ENCODE measurements at regions of chr2 and their contacts with region 1.

Region 1: GRCh38 chr2:229800997-229801754 is 86.8 kb upstream of the DNER start:
- DNase-seq: peak; percentile 68 to 87
- H3K4me3 ChIP-seq: no peak overlapping the region
- H3K27ac ChIP-seq: no peak overlapping the region
- H3K4me1 ChIP-seq: peaks cover 0 to 12% (median 5%) of the 10 kb centered on the region in 4 donors
- H3K27me3 ChIP-seq: no peaks in the 10 kb centered on the region
- CTCF ChIP-seq: peak in 5 of 7 experiments; percentile 29 to 71 (median 63)
- EP300 ChIP-seq: no peak
- POLR2A ChIP-seq: no peak

Region 2: DNA sequence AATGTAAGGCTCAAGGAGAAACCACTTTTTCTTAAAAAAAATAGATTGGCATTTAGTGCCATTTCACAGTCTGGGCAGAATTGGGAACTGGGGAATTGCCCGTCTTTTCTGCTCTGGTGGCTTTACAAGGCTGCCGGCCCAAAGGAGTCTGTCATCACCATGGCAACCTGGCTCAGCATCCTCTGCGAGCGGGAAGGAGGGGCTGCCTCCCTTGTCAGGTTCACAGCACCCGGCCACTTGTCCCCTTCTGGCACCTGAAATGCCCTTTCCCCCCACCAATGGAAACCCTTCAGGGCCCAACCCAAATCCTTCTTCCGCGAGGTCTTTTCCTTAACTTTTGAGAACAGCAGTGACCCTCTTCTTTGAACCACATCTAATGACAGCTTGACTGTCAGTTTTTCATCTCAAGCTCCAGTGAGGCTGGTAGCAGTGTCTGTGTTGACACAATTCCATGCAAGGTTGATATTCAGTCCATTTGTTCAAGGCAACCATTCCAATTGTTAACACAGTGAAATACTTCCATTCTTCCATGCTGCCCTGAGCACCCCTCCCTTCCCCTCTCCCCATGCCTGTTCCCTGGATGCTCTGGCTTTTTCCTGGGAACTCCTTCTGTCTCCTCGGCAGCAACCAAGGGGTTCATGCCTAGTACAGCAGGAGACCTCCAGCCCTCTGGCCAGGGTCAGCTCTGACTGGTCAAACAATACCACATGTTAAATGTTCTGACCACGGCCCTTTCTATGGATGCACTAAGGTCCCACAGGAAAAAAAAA is 166.4 kb before region 1 on chr2:
- intact Hi-C with region 1: no loop called
- DNase-seq: peak in 1 of 2 donors; percentile 15
- H3K4me3 ChIP-seq: no peak overlapping the region
- H3K27ac ChIP-seq: no peak overlapping the region
- H3K4me1 ChIP-seq: no peaks in the 10 kb centered on the region
- H3K27me3 ChIP-seq: peaks cover 0 to 22% (median 6%) of the 10 kb centered on the region in 3 donors
- CTCF ChIP-seq: no peak
- EP300 ChIP-seq: no peak
- POLR2A ChIP-seq: no peak

Region 3: DNA sequence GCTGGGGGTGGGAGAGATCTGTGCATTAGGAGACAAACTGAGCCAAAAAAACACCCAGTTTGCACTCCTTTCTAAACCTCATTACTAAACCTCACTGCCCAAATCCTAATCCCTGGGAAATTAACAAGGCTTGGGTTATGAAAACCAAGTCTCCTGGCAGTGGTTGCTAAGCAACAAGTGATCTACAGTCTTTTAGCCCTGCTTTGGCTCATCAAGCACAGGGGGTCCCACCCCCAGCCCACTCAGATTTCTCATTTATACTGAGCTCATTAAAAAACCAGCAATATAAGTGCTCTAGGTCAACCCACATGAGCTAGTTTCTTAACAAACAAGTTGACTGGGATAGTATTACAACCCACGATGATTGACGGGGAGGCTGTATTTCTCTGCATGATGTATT is 105.2 kb before region 1 on chr2:
- intact Hi-C with region 1: no loop called
- DNase-seq: no peak
- H3K4me3 ChIP-seq: no peak overlapping the region
- H3K27ac ChIP-seq: no peak overlapping the region
- H3K4me1 ChIP-seq: no peaks in the 10 kb centered on the region
- H3K27me3 ChIP-seq: no peaks in the 10 kb centered on the region
- CTCF ChIP-seq: no peak
- EP300 ChIP-seq: no peak
- POLR2A ChIP-seq: no peak

Region 4: DNA sequence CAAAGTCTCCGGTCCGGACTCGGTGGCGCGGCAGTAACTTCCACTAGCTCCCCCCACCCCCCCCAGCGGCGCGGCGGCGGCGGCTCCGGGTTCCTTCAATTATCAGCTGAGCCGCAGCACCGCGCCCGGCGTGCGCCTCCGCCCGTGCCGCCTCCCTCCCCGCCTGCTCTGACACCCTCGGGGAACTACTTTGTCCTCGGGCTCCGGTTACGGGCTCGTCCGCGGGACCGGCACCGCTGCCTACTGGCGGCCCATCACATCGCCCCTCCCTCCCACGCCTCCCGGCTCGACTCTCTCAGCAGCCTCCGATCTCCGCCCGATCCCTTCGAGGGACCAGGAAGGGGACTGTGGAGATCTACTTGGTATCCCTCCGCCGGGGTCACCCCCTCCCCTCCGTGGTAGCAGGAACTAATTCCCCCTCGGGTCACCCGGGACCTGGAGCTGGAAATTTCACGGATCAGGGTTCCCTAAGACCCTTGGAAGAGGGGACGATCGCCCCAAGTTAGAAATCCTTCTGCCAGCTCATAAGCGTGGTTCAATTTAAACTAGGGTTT is 120.8 kb after region 1 on chr2 and contains the start of gene TRIP12:
- intact Hi-C with region 1: loop called (anchors 10 kb)
- DNase-seq: peak; percentile 92 to 98
- H3K4me3 ChIP-seq: peak within 1 kb of the TSS; percentile 91 to 98 (median 94)
- H3K27ac ChIP-seq: peak within 1 kb of the TSS; percentile 94 to 99 (median 99)
- H3K4me1 ChIP-seq: peaks cover 6 to 49% (median 36%) of the 10 kb centered on the region in 4 donors
- H3K27me3 ChIP-seq: no peaks in the 10 kb centered on the region
- CTCF ChIP-seq: no peak
- EP300 ChIP-seq: no peak
- POLR2A ChIP-seq: no peak
- total RNA-seq, gene TRIP12: 91.2 to 342 (median 146) TPM

Region 5: DNA sequence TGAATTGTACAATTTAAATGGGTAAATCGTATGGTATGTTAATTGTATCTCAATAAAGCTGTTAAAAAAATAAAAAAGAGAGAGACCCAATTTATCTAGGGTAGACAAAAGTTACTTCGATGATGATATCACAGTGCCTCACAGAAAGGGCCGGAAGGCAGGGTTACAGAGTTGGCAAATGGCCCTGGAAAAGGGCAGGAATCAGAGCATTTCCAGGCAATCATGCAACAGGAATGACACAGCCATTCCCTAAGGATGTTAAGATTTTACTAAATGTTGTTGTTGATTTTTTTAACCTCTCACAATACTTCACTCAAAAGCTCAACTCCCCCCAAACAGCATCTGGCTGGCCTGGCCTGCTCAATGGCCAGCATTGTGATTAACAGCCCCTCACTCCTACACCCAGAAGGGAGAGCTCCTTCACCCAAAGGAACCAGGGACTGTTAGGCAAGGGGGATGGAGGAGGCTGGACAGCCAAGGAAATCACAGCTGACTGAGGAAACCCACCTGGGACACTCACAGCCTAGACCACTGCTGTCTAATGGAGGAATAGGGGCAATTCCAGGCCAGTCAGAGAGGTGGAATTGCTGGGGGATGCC is 607.2 kb after region 1 on chr2:
- intact Hi-C with region 1: no loop called
- DNase-seq: peak in 1 of 2 donors; percentile 40
- H3K4me3 ChIP-seq: no peak overlapping the region
- H3K27ac ChIP-seq: peak overlapping the region; percentile 41 to 67 (median 50)
- H3K4me1 ChIP-seq: peaks cover 7 to 32% (median 21%) of the 10 kb centered on the region in 4 donors
- H3K27me3 ChIP-seq: no peaks in the 10 kb centered on the region
- CTCF ChIP-seq: no peak
- EP300 ChIP-seq: no peak
- POLR2A ChIP-seq: no peak

Measured in stomach (tissue), 19 donors.